ENCODE measurements at regions of chr11 and their contacts with region 1.

Region 1: DNA sequence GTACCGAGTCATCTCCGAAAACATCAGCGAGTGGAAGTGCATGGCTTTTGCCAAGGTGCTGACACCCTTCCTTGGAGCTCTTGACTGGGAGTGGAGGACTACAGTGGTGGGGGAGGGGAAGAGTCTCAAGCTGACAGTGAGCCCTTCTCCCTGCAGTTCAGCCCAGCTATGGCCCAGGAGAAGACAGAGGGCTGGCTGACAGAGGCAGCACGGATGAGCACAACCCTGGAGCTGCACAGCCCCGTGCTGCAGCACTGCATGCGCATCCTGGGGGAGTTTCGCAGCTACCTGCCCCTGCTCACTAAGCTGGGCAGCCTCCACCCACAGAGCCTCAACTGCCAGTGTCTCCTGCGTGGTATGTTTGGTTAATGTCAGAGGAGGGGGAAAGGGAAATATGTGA is 41.4 kb downstream of the DNHD1 start:
- DNase-seq: peak; percentile 77
- H3K4me3 ChIP-seq: no peak overlapping the region
- H3K27ac ChIP-seq: no peak overlapping the region
- H3K4me1 ChIP-seq: no peaks in the 10 kb centered on the region
- H3K27me3 ChIP-seq: no peaks in the 10 kb centered on the region
- CTCF ChIP-seq: no peak
- EP300 ChIP-seq: no peak
- POLR2A ChIP-seq: no peak

Region 2: GRCh38 chr11:6345366-6345765 is 193.1 kb before region 1 on chr11:
- intact Hi-C with region 1: no loop called
- DNase-seq: no peak
- H3K4me3 ChIP-seq: no peak overlapping the region
- H3K27ac ChIP-seq: no peak overlapping the region
- H3K4me1 ChIP-seq: no peaks in the 10 kb centered on the region
- H3K27me3 ChIP-seq: no peaks in the 10 kb centered on the region
- CTCF ChIP-seq: no peak
- EP300 ChIP-seq: no peak
- POLR2A ChIP-seq: no peak

Region 3: GRCh38 chr11:6576471-6577373 is 38.3 kb after region 1 on chr11:
- intact Hi-C with region 1: loop called (anchors 5 kb)
- DNase-seq: peak; percentile 83
- H3K4me3 ChIP-seq: no peak overlapping the region
- H3K27ac ChIP-seq: peak overlapping the region; percentile 57 to 76 (median 62)
- H3K4me1 ChIP-seq: peaks cover 18 to 38% (median 29%) of the 10 kb centered on the region in 4 donors
- H3K27me3 ChIP-seq: no peaks in the 10 kb centered on the region
- CTCF ChIP-seq: no peak
- EP300 ChIP-seq: no peak
- POLR2A ChIP-seq: no peak